Panc1 (cell line): ENCODE measurements at regions of chr10 and their contacts with region 1.

Region 1: DNA sequence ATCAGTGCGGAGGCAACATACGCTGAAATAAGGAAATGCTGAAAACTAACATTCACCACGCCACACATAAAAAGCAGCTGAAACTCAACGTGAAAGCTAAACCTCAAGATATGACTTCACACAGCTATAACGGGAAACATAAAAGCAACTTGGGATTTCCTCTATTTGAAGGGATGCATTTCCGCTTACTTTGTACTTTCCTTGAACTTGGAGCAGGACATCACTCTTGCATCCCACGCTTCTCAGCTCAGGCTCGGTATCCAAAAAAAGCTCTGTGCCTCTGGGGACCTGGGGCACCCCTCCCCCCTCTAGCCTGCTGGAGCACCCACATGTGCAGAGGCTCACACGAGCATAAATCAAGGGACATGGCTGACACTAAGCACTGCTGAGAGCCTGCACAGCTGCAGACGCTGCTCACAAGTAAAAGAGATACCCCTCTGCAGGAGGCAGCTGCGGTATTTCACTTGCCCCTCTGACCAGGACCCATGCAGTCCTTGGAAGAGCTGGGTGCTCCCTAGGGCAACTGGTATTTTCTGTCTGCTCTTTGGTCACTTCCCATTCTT is 34.2 kb downstream of the PARD3 start:
- DNase-seq: no peak
- ATAC-seq: no peak
- H3K4me3 ChIP-seq: no peak overlapping the region
- H3K27ac ChIP-seq: no peak overlapping the region
- H3K4me1 ChIP-seq: peaks cover 12% of the 10 kb centered on the region
- H3K27me3 ChIP-seq: no peaks in the 10 kb centered on the region
- CTCF ChIP-seq: no peak

Region 2: GRCh38 chr10:34696423-34696822 is 84.5 kb before region 1 on chr10:
- CTCF ChIA-PET with region 1: no interaction called
- POLR2A ChIA-PET with region 1: interaction called, 10 read pairs
- in situ Hi-C with region 1: no loop called
- intact Hi-C with region 1: no loop called
- DNase-seq: no peak
- ATAC-seq: no peak
- H3K4me3 ChIP-seq: no peak overlapping the region
- H3K27ac ChIP-seq: no peak overlapping the region
- H3K4me1 ChIP-seq: peaks cover 24% of the 10 kb centered on the region
- H3K27me3 ChIP-seq: no peaks in the 10 kb centered on the region
- CTCF ChIP-seq: no peak